ENCODE measurements at regions of chr13 and their contacts with region 1.

Region 1: GRCh38 chr13:110819203-110820014 is 95.5 kb downstream of the ANKRD10 start:
- DNase-seq: peak; percentile 64
- ATAC-seq: peak; percentile 92
- H3K4me3 Mint-ChIP-seq: no peak overlapping the region
- H3K27ac Mint-ChIP-seq: no peak overlapping the region
- H3K4me1 Mint-ChIP-seq: peaks cover 3% of the 10 kb centered on the region
- H3K27me3 Mint-ChIP-seq: peaks cover 2% of the 10 kb centered on the region
- CTCF ChIP-seq: peak; percentile 67

Region 2: DNA sequence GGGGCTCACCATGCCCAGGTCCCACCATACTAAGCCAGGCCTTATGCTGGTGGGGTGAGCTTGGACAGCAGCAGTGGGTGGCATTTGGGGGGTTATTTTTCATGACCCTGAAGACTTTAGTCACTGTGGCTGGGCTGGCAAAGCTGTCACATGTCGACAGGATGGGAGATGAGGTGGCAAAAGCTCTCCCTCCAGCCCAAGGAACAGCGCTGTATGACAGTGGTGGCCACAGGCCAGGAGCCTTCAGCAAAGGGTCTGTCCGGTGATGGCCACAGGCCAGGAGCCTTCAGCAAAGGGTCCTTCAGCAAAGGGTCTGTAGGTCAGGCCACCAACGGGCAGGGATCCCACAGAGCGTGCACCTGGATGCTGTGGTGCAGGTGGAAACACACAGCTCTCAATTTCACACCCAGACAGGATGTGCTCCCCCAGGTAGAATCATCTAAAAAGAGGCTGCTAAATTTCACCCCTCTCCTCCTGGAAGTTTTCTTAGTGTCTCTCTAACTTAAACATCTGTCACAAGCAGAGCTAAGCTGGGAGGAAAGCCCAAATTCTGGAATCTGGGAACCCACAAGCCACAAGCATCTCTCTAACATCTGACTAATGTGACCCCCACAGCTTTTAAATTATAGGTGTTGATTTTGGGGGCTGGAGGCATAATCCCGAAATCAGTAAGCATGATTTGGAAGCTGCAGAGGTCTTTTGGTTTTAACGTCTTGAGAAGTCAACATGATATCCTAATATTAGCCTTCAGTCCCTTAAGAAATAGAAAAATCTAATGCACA is 535.5 kb before region 1 on chr13:
- CTCF ChIA-PET with region 1: no interaction called
- POLR2A ChIA-PET with region 1: no interaction called
- intact Hi-C with region 1: no loop called
- DNase-seq: no peak
- ATAC-seq: no peak
- H3K4me3 Mint-ChIP-seq: no peak overlapping the region
- H3K27ac Mint-ChIP-seq: no peak overlapping the region
- H3K4me1 Mint-ChIP-seq: no peaks in the 10 kb centered on the region
- H3K27me3 Mint-ChIP-seq: no peaks in the 10 kb centered on the region
- CTCF ChIP-seq: no peak

Region 3: GRCh38 chr13:110593430-110594130 is 225.8 kb before region 1 on chr13:
- CTCF ChIA-PET with region 1: interaction called, 14 read pairs
- POLR2A ChIA-PET with region 1: no interaction called
- intact Hi-C with region 1: loop called (anchors 1 kb)
- DNase-seq: no peak
- ATAC-seq: peak; percentile 81
- H3K4me3 Mint-ChIP-seq: no peak overlapping the region
- H3K27ac Mint-ChIP-seq: no peak overlapping the region
- H3K4me1 Mint-ChIP-seq: no peaks in the 10 kb centered on the region
- H3K27me3 Mint-ChIP-seq: no peaks in the 10 kb centered on the region
- CTCF ChIP-seq: no peak

Region 4: GRCh38 chr13:110644892-110645521 is 174.4 kb before region 1 on chr13:
- CTCF ChIA-PET with region 1: interaction called, 22 read pairs
- POLR2A ChIA-PET with region 1: interaction called, 7 read pairs
- intact Hi-C with region 1: loop called (anchors 1 kb)
- DNase-seq: peak; percentile 42
- ATAC-seq: peak; percentile 92
- H3K4me3 Mint-ChIP-seq: no peak overlapping the region
- H3K27ac Mint-ChIP-seq: no peak overlapping the region
- H3K4me1 Mint-ChIP-seq: peaks cover 31% of the 10 kb centered on the region
- H3K27me3 Mint-ChIP-seq: no peaks in the 10 kb centered on the region
- CTCF ChIP-seq: no peak

Region 5: DNA sequence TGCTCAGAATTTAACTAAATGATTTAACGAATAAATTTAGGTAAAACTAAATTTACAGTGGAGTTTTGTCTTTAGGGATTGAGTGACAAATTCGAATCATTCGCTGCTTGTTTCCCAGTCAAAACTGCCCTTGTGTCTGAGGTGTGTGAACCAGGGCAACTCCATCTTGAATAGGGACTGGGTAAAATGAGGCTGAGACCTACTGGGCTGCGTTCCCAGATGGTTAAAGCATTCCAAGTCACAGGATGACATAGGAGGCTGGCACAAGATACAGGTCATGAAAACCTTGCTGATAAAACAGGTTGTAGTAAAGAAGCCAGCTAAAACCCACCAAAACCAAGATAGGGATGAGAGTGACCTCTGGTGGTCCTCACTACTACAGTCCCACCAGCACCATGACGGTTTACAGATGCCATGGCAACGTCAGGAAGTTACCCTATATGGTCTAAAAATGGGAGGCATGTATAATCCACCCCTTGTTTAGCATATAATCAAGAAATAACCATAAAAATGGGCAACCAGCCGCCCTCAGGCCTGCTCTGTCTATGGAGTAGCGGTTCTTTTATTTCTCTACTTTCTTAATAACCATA is 105.7 kb after region 1 on chr13:
- CTCF ChIA-PET with region 1: no interaction called
- POLR2A ChIA-PET with region 1: no interaction called
- intact Hi-C with region 1: loop called (anchors 1 kb)
- DNase-seq: no peak
- ATAC-seq: peak; percentile 28
- H3K4me3 Mint-ChIP-seq: no peak overlapping the region
- H3K27ac Mint-ChIP-seq: no peak overlapping the region
- H3K4me1 Mint-ChIP-seq: peaks cover 21% of the 10 kb centered on the region
- H3K27me3 Mint-ChIP-seq: peaks cover 13% of the 10 kb centered on the region
- CTCF ChIP-seq: no peak